AG04449 (cell line): ENCODE measurements at regions of chr7 and their contacts with region 1.

Region 1: GRCh38 chr7:26686448-26686981 is 177.9 kb downstream of the SKAP2 start:
- DNase-seq: no peak
- H3K4me3 ChIP-seq: no peak overlapping the region
- CTCF ChIP-seq: peak; percentile 12

Region 2: DNA sequence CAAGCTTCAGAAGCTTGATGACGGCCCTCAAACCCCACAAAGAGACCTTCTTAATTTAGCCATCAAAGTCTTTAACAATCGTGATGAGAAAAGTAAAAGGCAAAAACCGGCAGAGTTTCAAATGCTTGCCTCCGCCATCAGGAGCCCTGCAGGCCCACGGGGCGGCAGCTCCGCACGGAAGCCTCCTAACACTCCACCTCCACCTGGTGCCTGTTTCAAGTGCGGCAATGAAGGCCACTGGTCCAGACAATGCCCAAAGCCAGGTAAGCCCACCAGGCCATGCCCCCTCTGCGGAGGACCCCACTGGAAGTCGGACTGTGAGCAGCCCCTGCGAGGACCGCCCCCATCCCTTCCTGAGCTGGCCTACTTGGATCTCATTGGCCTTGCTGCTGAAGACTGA is 441.4 kb before region 1 on chr7:
- CTCF ChIA-PET with region 1: no interaction called
- POLR2A ChIA-PET with region 1: no interaction called
- DNase-seq: no peak
- H3K4me3 ChIP-seq: no peak overlapping the region
- CTCF ChIP-seq: no peak

Region 3: DNA sequence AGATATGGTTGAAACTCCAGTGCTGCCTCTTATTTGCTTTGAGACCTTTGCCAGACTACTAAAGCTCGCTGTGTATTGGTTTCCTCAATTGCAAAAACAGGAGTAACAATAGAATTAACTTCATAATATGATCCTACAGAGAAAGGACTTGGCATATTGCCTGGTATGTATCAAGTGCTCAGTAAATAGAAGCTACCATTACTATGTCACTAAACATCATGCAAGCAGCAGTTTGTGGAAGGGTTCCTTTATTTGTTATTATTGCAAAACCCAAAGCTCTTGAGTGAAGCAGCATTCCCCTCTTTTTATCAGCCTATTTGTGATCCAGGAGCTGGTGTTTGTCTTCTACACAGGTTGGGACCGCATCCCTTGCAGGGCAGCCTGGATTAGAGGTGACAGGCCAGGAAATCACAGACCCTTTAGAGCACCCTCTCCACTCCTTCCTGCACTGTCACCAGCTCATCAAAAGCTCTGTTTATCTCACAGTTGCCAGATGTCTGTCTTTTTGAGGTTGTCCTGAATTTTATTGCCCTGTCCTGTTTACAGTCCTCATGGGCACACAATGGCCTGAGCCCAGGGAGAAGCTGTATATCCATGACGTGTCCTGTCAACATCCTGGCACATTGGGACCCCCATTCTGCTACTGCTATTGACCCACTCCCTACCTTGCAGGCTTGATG is 273.4 kb before region 1 on chr7:
- CTCF ChIA-PET with region 1: no interaction called
- POLR2A ChIA-PET with region 1: no interaction called
- DNase-seq: no peak
- H3K4me3 ChIP-seq: no peak overlapping the region
- CTCF ChIP-seq: no peak

Region 4: GRCh38 chr7:26667500-26668133 is 18.9 kb before region 1 on chr7:
- CTCF ChIA-PET with region 1: interaction called, 33 read pairs
- POLR2A ChIA-PET with region 1: no interaction called
- DNase-seq: peak; percentile 59
- H3K4me3 ChIP-seq: no peak overlapping the region
- CTCF ChIP-seq: peak; percentile 78

Region 5: GRCh38 chr7:26699766-26700165 is 13.3 kb after region 1 on chr7:
- CTCF ChIA-PET with region 1: interaction called, 10 read pairs
- POLR2A ChIA-PET with region 1: no interaction called
- DNase-seq: no peak
- H3K4me3 ChIP-seq: no peak overlapping the region
- CTCF ChIP-seq: no peak

Region 6: GRCh38 chr7:26705567-26705966 is 19.1 kb after region 1 on chr7:
- CTCF ChIA-PET with region 1: interaction called, 10 read pairs
- POLR2A ChIA-PET with region 1: no interaction called
- DNase-seq: peak; percentile 75
- H3K4me3 ChIP-seq: no peak overlapping the region
- CTCF ChIP-seq: no peak

Region 7: GRCh38 chr7:26729150-26729775 is 42.7 kb after region 1 on chr7:
- CTCF ChIA-PET with region 1: no interaction called
- POLR2A ChIA-PET with region 1: no interaction called
- DNase-seq: no peak
- H3K4me3 ChIP-seq: no peak overlapping the region
- CTCF ChIP-seq: no peak

Region 8: GRCh38 chr7:27143023-27143949 is 456.8 kb after region 1 on chr7 and contains the start of gene HOXA5:
- CTCF ChIA-PET with region 1: interaction called, 44 read pairs
- POLR2A ChIA-PET with region 1: no interaction called
- DNase-seq: no peak
- H3K4me3 ChIP-seq: peak within 1 kb of the TSS; percentile 48
- CTCF ChIP-seq: peak; percentile 59